Naive thymus-derived CD4-positive, alpha-beta T cell (primary cell): ENCODE measurements at regions of chr11 and their contacts with region 1.

Region 1: DNA sequence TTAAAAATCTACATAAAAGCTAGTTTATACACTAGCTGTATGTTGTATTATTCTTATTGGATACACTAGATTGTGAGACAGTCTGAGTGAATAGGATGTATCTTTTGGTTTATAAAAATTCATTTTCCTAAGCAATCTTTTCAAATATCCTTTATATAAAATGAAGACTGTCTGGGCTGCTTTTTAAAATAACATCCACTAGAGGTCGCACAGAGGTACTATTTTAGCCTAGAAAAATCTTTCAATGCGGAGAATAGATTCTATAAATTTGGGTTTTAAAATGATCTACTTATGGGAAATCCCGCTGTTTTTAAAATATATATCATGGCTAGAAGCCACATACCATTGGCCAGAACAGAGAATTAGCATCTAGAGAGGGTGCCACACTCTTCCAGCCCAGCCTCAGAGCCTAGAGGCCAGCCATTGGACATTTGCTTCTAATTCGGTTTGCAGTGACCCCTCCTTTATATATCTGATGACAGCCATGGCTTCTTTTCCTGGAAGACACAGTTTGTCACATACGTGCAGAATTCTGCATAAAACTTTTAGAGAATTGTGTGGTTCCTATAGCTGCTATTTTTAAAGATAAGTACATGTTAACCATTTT is 7.3 kb downstream of the C11orf97 start:
- DNase-seq: peak in 4 of 9 donors; percentile 18 to 41 (median 26)
- ATAC-seq: peak; percentile 70
- H3K4me3 ChIP-seq: no peak overlapping the region
- H3K4me3 Mint-ChIP-seq: no peak overlapping the region
- H3K27ac ChIP-seq: no peak overlapping the region
- H3K27ac Mint-ChIP-seq: no peak overlapping the region
- H3K4me1 ChIP-seq: no peaks in the 10 kb centered on the region
- H3K4me1 Mint-ChIP-seq: no peaks in the 10 kb centered on the region
- H3K27me3 ChIP-seq: no peaks in the 10 kb centered on the region
- H3K27me3 Mint-ChIP-seq: peaks cover 15 to 40% (median 21%) of the 10 kb centered on the region in 5 donors

Region 2: DNA sequence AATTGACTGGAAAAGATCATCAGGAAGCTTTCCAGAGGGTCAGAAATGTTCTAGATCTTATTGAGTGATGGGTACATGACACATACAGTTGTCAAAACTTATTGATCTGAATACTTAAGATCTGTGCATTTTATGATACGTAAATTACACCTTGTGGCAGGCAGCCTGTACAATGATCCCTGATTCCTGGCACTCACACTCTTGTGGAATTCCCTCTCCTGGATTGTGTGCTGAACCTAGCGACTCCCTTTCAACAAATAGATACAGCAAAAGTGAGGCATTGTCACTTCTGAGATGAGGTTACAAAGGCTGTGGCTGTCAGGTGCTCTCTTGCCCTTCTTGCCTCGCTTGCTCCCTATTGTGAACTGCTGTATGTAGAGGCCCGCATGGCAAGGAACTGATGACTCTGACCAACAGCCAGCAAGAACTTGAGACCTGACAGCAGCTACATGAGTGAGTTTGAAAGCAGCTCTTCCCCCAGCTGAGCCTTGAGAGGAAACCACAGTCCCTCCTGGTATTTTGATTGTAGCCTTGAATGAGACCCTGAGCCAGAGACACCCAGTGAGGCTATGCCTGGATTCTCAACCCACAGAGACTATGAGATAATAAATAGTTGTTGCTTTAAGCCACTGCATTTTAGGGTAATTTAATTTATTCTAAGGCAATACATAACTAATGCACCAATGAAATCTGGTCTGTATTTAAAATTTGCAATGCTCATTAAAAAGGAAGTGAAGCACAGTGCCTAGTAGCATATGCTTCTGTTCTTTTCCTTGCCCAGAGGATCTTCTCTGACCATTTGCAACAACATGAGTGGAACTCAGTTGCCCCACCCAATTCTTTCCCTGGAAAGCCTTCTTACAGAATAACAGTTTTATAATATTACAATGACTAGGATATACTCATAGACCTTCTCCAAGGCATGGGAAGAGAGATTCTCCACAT is 275.7 kb before region 1 on chr11:
- CTCF ChIA-PET with region 1: no interaction called
- POLR2A ChIA-PET with region 1: no interaction called
- intact Hi-C with region 1: no loop called
- DNase-seq: no peak
- ATAC-seq: no peak
- H3K4me3 ChIP-seq: no peak overlapping the region
- H3K4me3 Mint-ChIP-seq: peak overlapping the region in 1 of 10 donors; percentile 17
- H3K27ac ChIP-seq: no peak overlapping the region
- H3K27ac Mint-ChIP-seq: no peak overlapping the region
- H3K4me1 ChIP-seq: no peaks in the 10 kb centered on the region
- H3K4me1 Mint-ChIP-seq: no peaks in the 10 kb centered on the region
- H3K27me3 ChIP-seq: no peaks in the 10 kb centered on the region
- H3K27me3 Mint-ChIP-seq: peaks cover 0 to 5% (median 0%) of the 10 kb centered on the region in 5 donors

Region 3: GRCh38 chr11:94563176-94563847 is 43.7 kb after region 1 on chr11:
- CTCF ChIA-PET with region 1: no interaction called
- POLR2A ChIA-PET with region 1: no interaction called
- intact Hi-C with region 1: loop called in 1 of 2 experiments (anchors 1 kb)
- DNase-seq: no peak
- ATAC-seq: peak; percentile 42
- H3K4me3 ChIP-seq: no peak overlapping the region
- H3K4me3 Mint-ChIP-seq: no peak overlapping the region
- H3K27ac ChIP-seq: no peak overlapping the region
- H3K27ac Mint-ChIP-seq: no peak overlapping the region
- H3K4me1 ChIP-seq: no peaks in the 10 kb centered on the region
- H3K4me1 Mint-ChIP-seq: no peaks in the 10 kb centered on the region
- H3K27me3 ChIP-seq: no peaks in the 10 kb centered on the region
- H3K27me3 Mint-ChIP-seq: peaks cover 0 to 1% (median 0%) of the 10 kb centered on the region in 5 donors

Region 4: DNA sequence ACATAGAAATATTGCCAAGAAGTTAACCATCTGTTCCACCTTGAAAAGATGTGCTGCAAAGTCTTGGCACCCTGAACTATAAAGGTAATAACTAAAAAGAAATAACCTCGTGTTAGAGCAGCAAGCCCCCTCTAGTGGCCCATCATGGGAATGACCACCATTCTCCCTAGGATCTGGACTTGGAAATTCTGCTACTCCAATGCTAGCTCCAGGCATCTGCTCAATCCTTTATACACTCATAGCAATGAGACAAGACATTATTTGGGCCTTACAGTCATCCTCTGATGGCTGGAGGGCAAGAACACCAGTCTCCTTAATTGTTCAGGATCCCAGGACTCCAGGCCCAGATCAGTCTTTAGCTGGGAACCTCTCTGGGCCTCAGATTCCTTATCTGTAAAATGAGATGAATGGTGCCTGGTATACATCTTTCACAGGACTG is 377.8 kb after region 1 on chr11:
- CTCF ChIA-PET with region 1: no interaction called
- POLR2A ChIA-PET with region 1: no interaction called
- intact Hi-C with region 1: loop called in 1 of 2 experiments (anchors 1 kb)
- DNase-seq: peak in 5 of 9 donors; percentile 14 to 34 (median 26)
- ATAC-seq: peak; percentile 63
- H3K4me3 ChIP-seq: no peak overlapping the region
- H3K4me3 Mint-ChIP-seq: no peak overlapping the region
- H3K27ac ChIP-seq: no peak overlapping the region
- H3K27ac Mint-ChIP-seq: no peak overlapping the region
- H3K4me1 ChIP-seq: no peaks in the 10 kb centered on the region
- H3K4me1 Mint-ChIP-seq: peaks cover 0 to 5% (median 0%) of the 10 kb centered on the region in 7 donors
- H3K27me3 ChIP-seq: no peaks in the 10 kb centered on the region
- H3K27me3 Mint-ChIP-seq: peaks cover 0 to 7% (median 0%) of the 10 kb centered on the region in 5 donors

Region 5: DNA sequence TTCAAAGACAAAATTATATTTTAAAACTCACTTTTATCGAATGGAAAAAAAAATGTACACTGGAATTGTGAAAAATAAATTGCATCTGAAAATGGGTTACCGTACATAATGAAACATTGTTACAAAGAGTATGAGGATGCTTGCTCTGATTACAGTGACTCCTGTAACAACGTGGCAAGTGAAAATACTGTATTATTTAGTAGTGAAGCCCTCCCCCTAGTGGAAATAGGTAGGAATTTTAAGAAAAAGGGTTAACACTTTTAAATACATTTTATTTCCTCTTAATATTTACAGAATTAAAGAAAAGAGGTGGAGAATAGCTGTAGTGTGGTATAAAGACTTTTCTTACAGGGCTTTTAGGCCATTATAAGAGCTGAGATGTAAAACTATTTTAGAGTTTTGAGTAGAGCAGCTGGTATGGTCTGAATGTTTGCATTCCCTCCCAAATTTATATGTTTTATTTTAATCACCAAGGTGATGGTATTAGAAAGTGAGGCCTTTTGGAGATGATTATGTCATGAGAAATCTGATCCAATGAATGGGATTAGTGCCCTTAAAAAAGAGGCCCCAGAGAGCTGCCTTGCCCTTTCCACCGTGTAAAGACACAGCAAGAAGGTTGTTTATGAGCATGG is 1244.8 kb after region 1 on chr11:
- CTCF ChIA-PET with region 1: no interaction called
- POLR2A ChIA-PET with region 1: no interaction called
- intact Hi-C with region 1: loop called in 1 of 2 experiments (anchors 1 kb)
- DNase-seq: peak in 7 of 9 donors; percentile 43 to 73 (median 68)
- ATAC-seq: peak; percentile 95
- H3K4me3 ChIP-seq: no peak overlapping the region
- H3K4me3 Mint-ChIP-seq: no peak overlapping the region
- H3K27ac ChIP-seq: no peak overlapping the region
- H3K27ac Mint-ChIP-seq: no peak overlapping the region
- H3K4me1 ChIP-seq: no peaks in the 10 kb centered on the region
- H3K4me1 Mint-ChIP-seq: peaks cover 0 to 9% (median 0%) of the 10 kb centered on the region in 7 donors
- H3K27me3 ChIP-seq: no peaks in the 10 kb centered on the region
- H3K27me3 Mint-ChIP-seq: peaks cover 0 to 19% (median 0%) of the 10 kb centered on the region in 5 donors